ENCODE measurements at regions of chr1 and their contacts with region 1.

Region 1: GRCh38 chr1:35298464-35298863 is 30.0 kb downstream of the ZMYM4 start:
- DNase-seq: no peak
- ATAC-seq: peak; percentile 65 to 84 (median 74)
- H3K4me3 ChIP-seq: no peak overlapping the region
- H3K27ac ChIP-seq: no peak overlapping the region
- H3K4me1 ChIP-seq: peaks cover 0 to 14% (median 0%) of the 10 kb centered on the region in 4 donors
- H3K27me3 ChIP-seq: no peaks in the 10 kb centered on the region
- CTCF ChIP-seq: peak; percentile 36 to 45 (median 42)
- POLR2A ChIP-seq: no peak

Region 2: DNA sequence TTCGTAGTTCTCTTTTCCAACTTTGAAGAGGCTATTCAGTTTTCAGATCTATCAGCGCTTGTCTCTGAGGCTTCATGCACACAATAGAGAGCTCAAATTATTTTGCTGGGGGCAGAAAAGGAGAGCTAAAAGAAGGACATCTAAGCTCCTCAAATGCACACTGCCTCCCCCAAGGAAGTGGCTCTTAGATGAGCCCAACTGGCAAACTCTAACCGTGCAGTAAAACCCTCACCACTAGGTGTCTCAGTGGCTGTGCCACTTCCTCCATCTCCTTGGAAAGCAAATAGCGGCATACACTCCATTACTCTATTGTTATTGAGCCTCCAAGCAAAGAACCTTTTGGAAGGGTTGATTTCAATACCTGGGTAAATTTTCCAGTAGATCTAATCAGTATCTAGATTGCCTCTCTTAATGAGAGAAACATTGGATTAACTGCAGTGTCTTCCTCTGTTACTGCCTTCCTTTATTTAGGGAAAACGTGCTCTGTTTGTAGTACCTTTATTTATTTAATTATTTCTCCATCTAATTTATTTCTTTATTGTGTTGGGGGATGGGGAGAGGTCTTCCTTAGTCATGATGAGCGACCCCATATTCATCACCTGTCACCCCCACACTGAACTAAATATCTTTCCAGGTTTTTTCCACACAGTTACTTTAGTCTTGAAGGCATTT is 96.3 kb before region 1 on chr1:
- intact Hi-C with region 1: loop called in 1 of 2 experiments (anchors 10 kb)
- DNase-seq: peak in 2 of 3 donors; percentile 38 to 64
- ATAC-seq: peak; percentile 99 to 100 (median 100)
- H3K4me3 ChIP-seq: no peak overlapping the region
- H3K27ac ChIP-seq: no peak overlapping the region
- H3K4me1 ChIP-seq: no peaks in the 10 kb centered on the region
- H3K27me3 ChIP-seq: no peaks in the 10 kb centered on the region
- CTCF ChIP-seq: peak; percentile 81 to 95 (median 94)
- POLR2A ChIP-seq: no peak